ENCODE measurements at regions of chr1 and their contacts with region 1.

Region 1: DNA sequence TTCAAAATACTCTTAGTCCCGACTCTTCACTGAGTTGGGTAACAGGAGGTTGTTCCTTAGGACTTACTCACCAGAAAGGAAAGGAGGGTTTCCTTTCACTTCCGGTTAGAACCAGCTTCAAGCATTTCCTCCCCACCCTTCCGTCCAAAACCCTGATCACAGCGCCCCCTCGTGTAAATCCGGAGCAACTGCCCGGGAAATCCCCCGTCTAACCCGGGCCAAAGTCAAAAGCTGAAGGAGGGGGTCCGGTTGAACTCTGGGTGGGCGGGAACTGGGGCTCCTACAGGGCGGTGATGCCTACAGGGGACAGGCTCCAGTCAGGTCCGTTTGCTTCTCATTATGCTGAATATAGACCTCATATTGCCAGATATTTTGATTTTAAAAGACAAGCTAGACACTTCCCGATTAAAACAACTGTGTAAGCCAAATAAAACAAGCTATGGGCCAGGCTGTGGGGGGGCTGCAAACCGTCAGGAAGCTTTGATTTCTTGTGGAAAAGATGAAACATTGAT is 15.0 kb upstream of the MTARC2 start:
- DNase-seq: peak; percentile 87
- H3K4me3 ChIP-seq: peak overlapping the region in 3 of 4 donors; percentile 3 to 22 (median 4)
- H3K27ac ChIP-seq: peak overlapping the region; percentile 33 to 68 (median 42)
- H3K4me1 ChIP-seq: peaks cover 0 to 22% (median 11%) of the 10 kb centered on the region in 4 donors
- H3K27me3 ChIP-seq: no peaks in the 10 kb centered on the region
- CTCF ChIP-seq: peak; percentile 39 to 88 (median 77)
- EP300 ChIP-seq: no peak
- POLR2A ChIP-seq: no peak

Region 2: DNA sequence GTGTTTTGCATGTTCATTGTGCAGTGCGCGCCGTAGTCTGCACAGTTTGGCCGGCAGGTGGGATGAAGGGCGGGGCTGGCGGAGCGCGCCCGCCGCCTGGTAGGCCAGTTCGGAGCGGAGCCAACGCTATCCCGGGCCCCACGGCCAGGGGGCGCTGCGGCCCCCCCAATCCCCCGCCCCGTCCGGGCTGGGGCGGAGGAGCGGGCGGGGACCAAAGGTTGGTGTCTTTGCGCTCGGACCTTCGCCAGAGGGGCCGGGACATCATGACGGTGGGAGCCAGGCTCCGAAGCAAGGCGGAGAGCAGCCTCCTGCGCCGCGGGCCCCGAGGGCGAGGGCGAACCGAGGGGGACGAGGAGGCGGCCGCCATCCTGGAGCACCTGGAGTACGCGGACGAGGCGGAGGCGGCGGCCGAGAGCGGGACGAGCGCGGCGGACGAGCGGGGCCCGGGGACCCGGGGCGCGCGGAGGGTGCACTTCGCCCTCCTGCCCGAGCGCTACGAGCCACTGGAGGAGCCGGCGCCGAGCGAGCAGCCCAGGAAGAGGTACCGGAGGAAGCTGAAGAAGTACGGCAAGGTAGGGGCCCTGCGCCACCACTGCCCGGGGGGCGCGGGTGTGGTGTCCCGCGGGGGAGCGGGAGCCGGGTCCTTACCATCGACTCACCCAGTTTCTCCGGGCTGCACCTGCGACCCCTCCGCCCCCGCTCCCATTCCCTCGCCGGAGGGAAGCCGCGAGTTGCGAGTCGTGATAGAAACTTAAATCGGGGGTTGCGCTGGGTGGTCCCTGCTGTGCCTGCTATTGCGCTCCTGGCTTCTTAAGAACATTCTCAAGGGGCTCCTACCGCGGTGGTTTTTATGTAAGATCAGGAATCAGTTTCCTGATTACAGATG is 42.8 kb before region 1 on chr1 and contains the start of gene C1orf115:
- intact Hi-C with region 1: loop called (anchors 1 kb)
- DNase-seq: peak; percentile 87
- H3K4me3 ChIP-seq: peak within 1 kb of the TSS; percentile 55 to 89 (median 74)
- H3K27ac ChIP-seq: peak within 1 kb of the TSS; percentile 34 to 69 (median 56)
- H3K4me1 ChIP-seq: peaks cover 0 to 19% (median 15%) of the 10 kb centered on the region in 4 donors
- H3K27me3 ChIP-seq: no peaks in the 10 kb centered on the region
- CTCF ChIP-seq: peak; percentile 72 to 99 (median 87)
- EP300 ChIP-seq: no peak
- POLR2A ChIP-seq: no peak
- total RNA-seq, gene C1orf115: 3.9 to 8.9 (median 7.4) TPM

Region 3: DNA sequence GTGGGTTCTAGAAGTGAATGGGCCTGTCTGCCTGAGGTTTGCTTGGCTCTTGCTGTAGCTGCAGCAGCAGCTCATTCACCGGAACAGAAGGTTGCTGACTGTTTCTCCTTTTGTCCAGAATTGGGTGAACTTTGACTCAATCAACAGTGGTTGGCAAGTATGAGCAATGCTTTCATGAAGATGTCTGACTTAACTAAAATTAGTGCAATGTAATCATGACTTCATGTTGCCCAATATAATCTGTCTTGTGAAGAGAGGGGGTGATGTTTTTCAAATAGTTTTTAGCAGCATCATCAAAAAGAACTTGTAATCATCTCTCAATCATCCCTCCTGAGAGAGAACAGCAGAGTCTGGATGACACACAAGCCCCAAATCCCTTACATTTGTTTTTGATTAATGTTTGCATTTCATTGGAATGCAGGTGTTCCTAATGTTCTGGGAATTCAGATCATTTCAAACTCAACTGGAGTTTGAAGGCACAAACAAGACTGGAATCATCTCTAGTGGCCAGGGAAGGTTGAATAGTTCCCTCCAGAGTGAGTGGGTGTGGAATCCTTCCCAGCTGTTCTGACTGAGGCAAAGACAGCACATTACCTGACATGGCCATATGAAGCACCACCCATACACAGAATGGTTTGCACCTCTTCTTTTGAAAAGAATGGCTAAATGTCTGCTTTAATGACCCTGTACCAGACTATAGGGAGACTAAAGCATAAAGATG is 229.0 kb after region 1 on chr1:
- intact Hi-C with region 1: no loop called
- DNase-seq: no peak
- H3K4me3 ChIP-seq: no peak overlapping the region
- H3K27ac ChIP-seq: no peak overlapping the region
- H3K4me1 ChIP-seq: peaks cover 0 to 6% (median 0%) of the 10 kb centered on the region in 4 donors
- H3K27me3 ChIP-seq: no peaks in the 10 kb centered on the region
- CTCF ChIP-seq: no peak
- EP300 ChIP-seq: no peak
- POLR2A ChIP-seq: no peak

Measured in sigmoid colon (tissue), 7 donors.